ENCODE measurements at regions of chr3 and their contacts with region 1.

Region 1: GRCh38 chr3:149352556-149352955 is 19.1 kb upstream of the TM4SF18 start:
- DNase-seq: peak; percentile 45 to 75 (median 53)
- ATAC-seq: peak in 3 of 4 donors; percentile 83 to 87 (median 86)
- H3K4me3 ChIP-seq: no peak overlapping the region
- H3K27ac ChIP-seq: peak overlapping the region in 6 of 12 donors; percentile 3 to 24 (median 14)
- H3K4me1 ChIP-seq: peaks cover 0 to 12% (median 1%) of the 10 kb centered on the region in 12 donors
- H3K27me3 ChIP-seq: no peaks in the 10 kb centered on the region
- CTCF ChIP-seq: peak; percentile 54 to 76 (median 66)
- POLR2A ChIP-seq: no peak

Region 2: DNA sequence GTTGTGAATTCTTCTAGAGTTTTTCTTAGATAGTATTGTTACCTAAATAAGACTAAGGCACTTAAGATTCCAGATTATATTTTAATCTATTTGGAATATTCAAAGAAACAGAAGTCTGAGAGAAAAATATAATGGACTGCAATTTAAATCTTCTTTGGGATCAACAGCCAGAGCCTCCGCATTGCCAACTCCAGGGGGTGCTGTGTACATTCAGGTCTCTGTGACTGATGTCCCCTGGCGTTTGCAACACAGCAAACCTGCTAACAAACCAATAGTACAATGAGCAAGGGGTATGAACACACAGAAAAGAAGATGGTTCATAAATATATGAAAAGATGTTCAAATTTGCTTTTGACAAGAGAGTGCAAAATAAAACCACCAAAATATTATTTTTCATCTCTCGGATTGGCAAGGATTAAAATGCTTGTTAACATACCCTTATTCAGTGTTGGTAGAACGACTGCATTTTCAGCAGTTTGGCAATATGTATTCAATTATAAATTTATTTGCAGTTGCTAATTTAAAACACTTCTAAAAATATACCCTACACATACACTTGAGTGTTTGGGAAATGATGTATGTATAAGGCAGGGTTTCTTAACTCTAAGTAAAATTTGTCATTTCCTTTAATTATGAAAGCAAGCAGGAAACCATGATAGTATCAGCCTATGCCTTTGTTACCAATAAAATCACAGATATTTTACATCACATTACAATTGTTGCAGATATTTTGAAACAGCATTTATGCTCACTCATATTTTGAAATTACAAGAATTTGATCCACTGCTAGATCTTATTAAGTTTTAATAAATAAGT is 41.0 kb after region 1 on chr3:
- intact Hi-C with region 1: loop called in 1 of 10 experiments (anchors 5 kb)
- DNase-seq: peak; percentile 63 to 75 (median 74)
- ATAC-seq: peak; percentile 65 to 89 (median 82)
- H3K4me3 ChIP-seq: no peak overlapping the region
- H3K27ac ChIP-seq: peak overlapping the region in 6 of 12 donors; percentile 11 to 57 (median 24)
- H3K4me1 ChIP-seq: peaks cover 0 to 29% (median 8%) of the 10 kb centered on the region in 12 donors
- H3K27me3 ChIP-seq: no peaks in the 10 kb centered on the region
- CTCF ChIP-seq: peak; percentile 66 to 91 (median 81)
- POLR2A ChIP-seq: no peak